ENCODE measurements at regions of chr11 and their contacts with region 1.

Region 1: GRCh38 chr11:111185266-111185665 is 60.3 kb upstream of the POU2AF2 start:
- DNase-seq: no peak
- ATAC-seq: no peak
- H3K4me3 ChIP-seq: no peak overlapping the region
- H3K27ac ChIP-seq: no peak overlapping the region
- H3K4me1 ChIP-seq: no peaks in the 10 kb centered on the region
- H3K27me3 ChIP-seq: no peaks in the 10 kb centered on the region

Region 2: GRCh38 chr11:111123463-111124398 is 61.5 kb before region 1 on chr11:
- intact Hi-C with region 1: loop called in 1 of 2 experiments (anchors 10 kb)
- DNase-seq: no peak
- ATAC-seq: no peak
- H3K4me3 ChIP-seq: no peak overlapping the region
- H3K27ac ChIP-seq: no peak overlapping the region
- H3K4me1 ChIP-seq: no peaks in the 10 kb centered on the region
- H3K27me3 ChIP-seq: no peaks in the 10 kb centered on the region

Region 3: GRCh38 chr11:111162305-111162704 is 23.0 kb before region 1 on chr11:
- intact Hi-C with region 1: no loop called
- DNase-seq: no peak
- ATAC-seq: no peak
- H3K4me3 ChIP-seq: no peak overlapping the region
- H3K27ac ChIP-seq: no peak overlapping the region
- H3K4me1 ChIP-seq: no peaks in the 10 kb centered on the region
- H3K27me3 ChIP-seq: peaks cover 0 to 3% of the 10 kb centered on the region in 2 donors

Region 4: GRCh38 chr11:111204211-111204610 is 18.9 kb after region 1 on chr11:
- intact Hi-C with region 1: no loop called
- DNase-seq: no peak
- ATAC-seq: no peak
- H3K4me3 ChIP-seq: no peak overlapping the region
- H3K27ac ChIP-seq: no peak overlapping the region
- H3K4me1 ChIP-seq: peaks cover 2 to 5% of the 10 kb centered on the region in 2 donors
- H3K27me3 ChIP-seq: no peaks in the 10 kb centered on the region

Measured in aorta (tissue), 5 donors.